CD8-positive, alpha-beta T cell (primary cell): ENCODE measurements at regions of chr5 and their contacts with region 1.

Region 1: GRCh38 chr5:143403593-143404415 is at the start of gene NR3C1:
- DNase-seq: peak; percentile 77 to 96 (median 88)
- ATAC-seq: peak; percentile 67
- H3K4me3 ChIP-seq: peak within 1 kb of the TSS; percentile 74 to 94
- H3K4me3 Mint-ChIP-seq: peak within 1 kb of the TSS; percentile 95
- H3K27ac ChIP-seq: peak within 1 kb of the TSS; percentile 83 to 93
- H3K27ac Mint-ChIP-seq: peak within 1 kb of the TSS; percentile 97
- H3K4me1 ChIP-seq: peaks cover 35% of the 10 kb centered on the region
- H3K4me1 Mint-ChIP-seq: peaks cover 39% of the 10 kb centered on the region
- H3K27me3 ChIP-seq: no peaks in the 10 kb centered on the region
- H3K27me3 Mint-ChIP-seq: no peaks in the 10 kb centered on the region
- CTCF ChIP-seq: peak; percentile 65
- total RNA-seq, gene NR3C1: 179 to 181 TPM

Region 2: GRCh38 chr5:142108432-142109330 is 1295.1 kb before region 1 on chr5 and contains the start of gene NDFIP1:
- CTCF ChIA-PET with region 1: no interaction called
- POLR2A ChIA-PET with region 1: no interaction called
- intact Hi-C with region 1: loop called in 1 of 2 experiments (anchors 10 kb)
- DNase-seq: peak; percentile 71 to 93 (median 86)
- ATAC-seq: peak; percentile 73
- H3K4me3 ChIP-seq: peak within 1 kb of the TSS; percentile 71 to 85
- H3K4me3 Mint-ChIP-seq: peak within 1 kb of the TSS; percentile 99
- H3K27ac ChIP-seq: peak within 1 kb of the TSS; percentile 93 to 95
- H3K27ac Mint-ChIP-seq: peak within 1 kb of the TSS; percentile 99
- H3K4me1 ChIP-seq: peaks cover 74% of the 10 kb centered on the region
- H3K4me1 Mint-ChIP-seq: peaks cover 70% of the 10 kb centered on the region
- H3K27me3 ChIP-seq: no peaks in the 10 kb centered on the region
- H3K27me3 Mint-ChIP-seq: no peaks in the 10 kb centered on the region
- CTCF ChIP-seq: no peak
- total RNA-seq, gene NDFIP1: 156 to 167 TPM

Region 3: DNA sequence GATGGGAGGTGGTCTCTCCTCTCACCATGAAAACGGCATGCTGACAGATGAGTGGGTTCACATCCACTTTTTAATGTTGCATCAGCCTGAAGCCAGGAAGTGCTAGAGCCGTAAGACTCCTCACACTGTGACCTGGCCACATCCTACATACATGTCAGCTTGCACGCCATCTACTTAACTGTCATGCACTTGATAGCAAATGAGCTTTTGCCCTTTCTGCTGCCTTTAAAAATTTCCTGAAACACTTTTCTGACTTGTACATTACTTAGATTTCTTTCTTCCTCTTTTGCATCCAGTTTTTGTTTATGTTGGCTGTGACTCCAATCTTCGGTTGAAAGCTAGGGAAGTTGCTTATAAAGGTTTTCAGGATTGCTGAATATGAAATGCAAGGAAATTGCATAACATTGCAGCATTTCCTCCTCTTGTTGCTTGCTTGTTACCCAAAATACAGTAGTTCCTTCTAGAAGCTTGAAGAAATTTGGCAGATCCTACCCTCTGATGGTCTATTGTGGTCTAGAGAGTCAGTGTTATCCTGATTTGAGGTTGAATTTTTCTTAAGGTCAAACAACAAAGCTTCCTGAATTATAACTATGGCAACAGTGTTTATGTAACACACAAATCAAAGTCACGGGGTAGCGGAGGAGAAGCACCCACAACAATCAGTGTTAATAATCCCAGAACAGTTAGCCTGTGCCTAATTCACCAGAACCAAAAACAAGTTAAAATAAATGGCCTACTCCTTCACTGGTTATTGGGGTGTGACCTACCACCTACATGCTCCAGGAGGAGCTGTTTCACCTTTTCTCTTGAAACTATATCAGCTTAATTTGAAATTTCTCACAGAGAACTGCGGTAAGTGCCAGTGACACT is 401.1 kb before region 1 on chr5:
- CTCF ChIA-PET with region 1: interaction called, 10 read pairs
- POLR2A ChIA-PET with region 1: interaction called, 47 read pairs
- intact Hi-C with region 1: loop called (anchors 2 kb)
- DNase-seq: peak; percentile 16 to 94 (median 58)
- ATAC-seq: peak; percentile 85
- H3K4me3 ChIP-seq: peak overlapping the region in 1 of 2 experiments; percentile 1
- H3K4me3 Mint-ChIP-seq: peak overlapping the region; percentile 56
- H3K27ac ChIP-seq: peak overlapping the region; percentile 83 to 89
- H3K27ac Mint-ChIP-seq: peak overlapping the region; percentile 87
- H3K4me1 ChIP-seq: peaks cover 43% of the 10 kb centered on the region
- H3K4me1 Mint-ChIP-seq: peaks cover 70% of the 10 kb centered on the region
- H3K27me3 ChIP-seq: no peaks in the 10 kb centered on the region
- H3K27me3 Mint-ChIP-seq: no peaks in the 10 kb centered on the region
- CTCF ChIP-seq: peak; percentile 70

Region 4: GRCh38 chr5:143222287-143223231 is 181.2 kb before region 1 on chr5:
- CTCF ChIA-PET with region 1: no interaction called
- POLR2A ChIA-PET with region 1: interaction called, 3 read pairs
- intact Hi-C with region 1: loop called (anchors 2 kb)
- DNase-seq: peak; percentile 30 to 92 (median 56)
- ATAC-seq: peak; percentile 85
- H3K4me3 ChIP-seq: no peak overlapping the region
- H3K4me3 Mint-ChIP-seq: peak overlapping the region; percentile 27
- H3K27ac ChIP-seq: peak overlapping the region; percentile 48 to 95
- H3K27ac Mint-ChIP-seq: peak overlapping the region; percentile 88
- H3K4me1 ChIP-seq: peaks cover 22% of the 10 kb centered on the region
- H3K4me1 Mint-ChIP-seq: peaks cover 38% of the 10 kb centered on the region
- H3K27me3 ChIP-seq: no peaks in the 10 kb centered on the region
- H3K27me3 Mint-ChIP-seq: no peaks in the 10 kb centered on the region
- CTCF ChIP-seq: no peak

Region 5: DNA sequence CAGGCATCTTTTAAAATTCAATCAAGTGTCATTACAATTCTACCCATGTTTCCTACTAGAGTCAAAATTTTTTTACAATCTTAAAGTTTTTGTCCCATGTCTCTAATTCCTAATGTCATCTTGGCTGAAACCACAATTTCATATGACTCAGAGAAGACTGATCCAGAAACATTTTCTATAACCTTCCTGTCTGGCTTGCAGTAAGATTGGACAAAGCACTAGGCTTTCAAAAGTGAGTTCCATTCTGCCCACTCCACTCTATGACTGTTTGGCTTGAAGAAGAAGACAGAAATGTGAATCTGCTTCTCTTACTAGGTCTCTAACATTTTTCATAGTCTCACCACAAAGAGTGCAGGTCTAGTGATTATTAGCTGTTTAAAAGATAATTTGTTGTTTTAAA is 89.1 kb before region 1 on chr5:
- CTCF ChIA-PET with region 1: interaction called, 3 read pairs
- POLR2A ChIA-PET with region 1: no interaction called
- intact Hi-C with region 1: loop called in 1 of 2 experiments (anchors 5 kb)
- DNase-seq: no peak
- ATAC-seq: no peak
- H3K4me3 ChIP-seq: no peak overlapping the region
- H3K4me3 Mint-ChIP-seq: no peak overlapping the region
- H3K27ac ChIP-seq: no peak overlapping the region
- H3K27ac Mint-ChIP-seq: no peak overlapping the region
- H3K4me1 ChIP-seq: no peaks in the 10 kb centered on the region
- H3K4me1 Mint-ChIP-seq: peaks cover 37% of the 10 kb centered on the region
- H3K27me3 ChIP-seq: no peaks in the 10 kb centered on the region
- H3K27me3 Mint-ChIP-seq: no peaks in the 10 kb centered on the region
- CTCF ChIP-seq: no peak

Region 6: GRCh38 chr5:143435210-143435657 is 31.4 kb after region 1 on chr5:
- CTCF ChIA-PET with region 1: interaction called, 25 read pairs
- POLR2A ChIA-PET with region 1: interaction called, 125 read pairs
- intact Hi-C with region 1: loop called (anchors 1 kb)
- DNase-seq: peak in 7 of 9 experiments; percentile 12 to 78 (median 49)
- ATAC-seq: peak; percentile 62
- H3K4me3 ChIP-seq: peak overlapping the region; percentile 44 to 52
- H3K4me3 Mint-ChIP-seq: peak overlapping the region; percentile 94
- H3K27ac ChIP-seq: peak overlapping the region; percentile 64 to 70
- H3K27ac Mint-ChIP-seq: peak overlapping the region; percentile 97
- H3K4me1 ChIP-seq: peaks cover 24% of the 10 kb centered on the region
- H3K4me1 Mint-ChIP-seq: peaks cover 69% of the 10 kb centered on the region
- H3K27me3 ChIP-seq: no peaks in the 10 kb centered on the region
- H3K27me3 Mint-ChIP-seq: no peaks in the 10 kb centered on the region
- CTCF ChIP-seq: no peak

Region 7: DNA sequence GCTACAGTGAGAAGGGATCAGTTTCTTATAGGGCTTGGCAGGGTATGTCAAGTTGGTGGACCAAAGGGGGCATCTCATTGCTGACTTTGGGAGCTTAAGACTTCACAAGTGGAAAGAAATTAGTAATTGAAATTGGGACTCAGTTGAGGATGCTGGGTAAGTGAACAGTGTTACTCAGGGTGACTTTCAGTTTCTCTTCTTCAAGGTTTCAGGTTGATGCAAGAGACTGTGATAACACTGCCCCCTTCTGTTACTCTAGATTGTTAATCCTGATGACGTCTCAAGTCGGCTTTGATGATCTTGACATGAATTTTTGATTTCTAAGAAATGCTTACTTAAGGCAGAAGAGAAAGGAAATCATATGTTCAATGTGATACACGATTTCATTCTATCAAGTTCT is 788.2 kb after region 1 on chr5:
- CTCF ChIA-PET with region 1: interaction called, 7 read pairs
- POLR2A ChIA-PET with region 1: interaction called, 13 read pairs
- intact Hi-C with region 1: loop called (anchors 1 to 5 kb)
- DNase-seq: peak in 7 of 9 experiments; percentile 15 to 93 (median 32)
- ATAC-seq: peak; percentile 43
- H3K4me3 ChIP-seq: peak overlapping the region; percentile 7 to 27
- H3K4me3 Mint-ChIP-seq: no peak overlapping the region
- H3K27ac ChIP-seq: peak overlapping the region; percentile 9 to 81
- H3K27ac Mint-ChIP-seq: no peak overlapping the region
- H3K4me1 ChIP-seq: peaks cover 49% of the 10 kb centered on the region
- H3K4me1 Mint-ChIP-seq: peaks cover 43% of the 10 kb centered on the region
- H3K27me3 ChIP-seq: no peaks in the 10 kb centered on the region
- H3K27me3 Mint-ChIP-seq: no peaks in the 10 kb centered on the region
- CTCF ChIP-seq: peak; percentile 68